ENCODE measurements at regions of chr12 and their contacts with region 1.

Region 1: DNA sequence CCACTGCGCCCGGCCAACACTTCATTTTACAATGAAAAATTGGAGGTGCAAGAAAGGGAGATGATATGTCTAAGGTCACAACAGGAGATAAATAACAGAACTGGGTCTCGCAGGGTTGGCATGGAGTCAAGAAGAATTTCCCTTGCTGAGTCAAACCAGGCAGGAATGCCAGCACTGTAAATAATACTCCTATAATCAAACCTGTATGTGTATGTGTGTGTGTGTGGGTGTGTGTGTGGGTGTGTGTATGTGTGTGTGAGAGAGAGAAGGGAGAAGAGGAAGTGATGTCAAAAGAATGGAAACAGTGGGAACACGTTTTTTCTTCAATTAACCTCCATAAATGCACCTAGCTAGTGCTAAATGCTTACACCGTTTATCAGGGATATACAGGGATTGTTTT is 70.4 kb downstream of the TMEM116 start:
- DNase-seq: peak; percentile 46
- H3K4me3 ChIP-seq: no peak overlapping the region
- CTCF ChIP-seq: no peak

Region 2: DNA sequence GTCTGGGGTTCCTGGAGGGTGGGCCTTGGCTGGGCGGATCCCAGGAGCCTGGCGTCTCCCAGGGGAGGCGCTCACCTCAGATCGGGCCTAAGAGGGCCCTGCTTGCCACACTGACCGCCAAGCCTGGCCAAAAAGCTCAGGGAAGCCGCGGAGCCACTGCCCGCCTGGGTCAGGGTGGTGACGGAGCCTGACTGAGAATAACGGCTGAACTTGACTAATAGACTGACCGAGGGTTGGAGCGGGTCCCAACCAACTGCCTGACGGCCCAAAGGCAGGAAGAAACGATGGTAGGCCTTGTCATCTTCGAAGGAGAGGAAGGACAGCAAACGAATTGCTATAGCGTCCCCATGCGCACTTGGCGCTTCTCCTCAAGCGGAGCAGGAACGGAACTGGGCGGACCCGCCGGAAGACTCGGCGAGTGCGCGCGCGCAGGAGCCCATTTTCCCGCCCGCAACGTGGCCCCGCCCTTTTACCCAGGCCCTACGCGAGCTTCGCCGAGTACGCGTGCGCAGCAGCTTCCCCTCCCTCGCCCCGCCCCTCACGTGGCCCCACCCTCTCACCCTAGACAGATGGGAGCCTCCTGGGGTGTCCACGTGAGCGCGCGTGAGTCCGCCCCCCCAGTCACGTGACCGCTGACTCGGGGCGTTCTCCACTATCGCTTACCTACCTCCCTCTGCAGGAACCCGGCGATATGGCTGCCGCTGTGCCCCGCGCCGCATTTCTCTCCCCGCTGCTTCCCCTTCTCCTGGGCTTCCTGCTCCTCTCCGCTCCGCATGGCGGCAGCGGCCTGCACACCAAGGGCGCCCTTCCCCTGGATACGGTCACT is 70.4 kb after region 1 on chr12 and contains the starts of genes ERP29 and TMEM116:
- CTCF ChIA-PET with region 1: interaction called, 21 read pairs
- POLR2A ChIA-PET with region 1: no interaction called
- DNase-seq: peak; percentile 84
- H3K4me3 ChIP-seq: peak within 1 kb of the TSS; percentile 96
- CTCF ChIP-seq: peak; percentile 71

Measured in AG04449 (cell line).